T-cell (primary cell): ENCODE measurements at regions of chr1 and their contacts with region 1.

Region 1: DNA sequence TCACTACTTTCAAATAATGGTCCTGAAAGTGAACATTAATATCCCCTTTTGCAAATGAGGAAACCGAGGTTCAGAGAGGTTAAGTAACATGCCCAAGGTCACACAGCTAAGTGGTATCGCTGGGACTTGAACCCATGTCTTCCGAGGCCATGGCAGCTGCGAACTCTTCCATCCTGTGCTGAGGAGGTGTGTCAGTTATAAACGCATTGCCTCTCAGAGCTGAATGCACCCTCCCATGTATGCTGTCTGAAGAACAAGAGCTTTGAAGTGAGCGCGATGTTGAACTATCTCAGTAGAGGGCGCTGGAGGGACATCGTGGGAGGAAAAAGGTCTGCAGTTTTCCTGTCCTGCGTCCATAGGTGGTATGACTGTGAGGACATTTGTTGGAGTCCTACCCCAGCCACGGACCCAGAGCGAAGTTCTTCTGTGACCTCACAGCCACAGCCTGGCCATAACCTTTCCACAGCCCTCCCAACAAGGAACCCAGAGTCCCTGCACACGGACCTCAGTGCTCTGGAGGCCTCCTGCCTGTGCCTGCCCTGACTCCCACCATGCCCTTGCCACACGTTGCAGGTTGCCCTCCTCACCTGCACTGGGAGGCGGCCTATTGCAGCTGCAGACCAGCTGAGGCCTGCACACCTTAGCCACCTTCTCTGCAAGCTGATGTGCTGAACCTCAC is 7.5 kb downstream of the MYOC start:
- DNase-seq: peak; percentile 6 to 74 (median 47)
- ATAC-seq: peak; percentile 84 to 88 (median 87)
- H3K4me3 ChIP-seq: no peak overlapping the region
- H3K4me3 Mint-ChIP-seq: no peak overlapping the region
- H3K27ac ChIP-seq: no peak overlapping the region
- H3K27ac Mint-ChIP-seq: no peak overlapping the region
- H3K4me1 ChIP-seq: peaks cover 0 to 6% of the 10 kb centered on the region in 2 experiments
- H3K4me1 Mint-ChIP-seq: peaks cover 5 to 7% (median 6%) of the 10 kb centered on the region in 3 donors
- H3K27me3 ChIP-seq: peaks cover 0 to 13% of the 10 kb centered on the region in 2 experiments
- H3K27me3 Mint-ChIP-seq: peaks cover 3 to 5% of the 10 kb centered on the region in 2 donors

Region 2: GRCh38 chr1:171583581-171584201 is 61.3 kb before region 1 on chr1:
- CTCF ChIA-PET with region 1: no interaction called
- POLR2A ChIA-PET with region 1: no interaction called
- DNase-seq: no peak
- ATAC-seq: no peak
- H3K4me3 ChIP-seq: no peak overlapping the region
- H3K4me3 Mint-ChIP-seq: no peak overlapping the region
- H3K27ac ChIP-seq: no peak overlapping the region
- H3K27ac Mint-ChIP-seq: no peak overlapping the region
- H3K4me1 ChIP-seq: no peaks in the 10 kb centered on the region
- H3K4me1 Mint-ChIP-seq: peaks cover 5 to 18% (median 11%) of the 10 kb centered on the region in 3 donors
- H3K27me3 ChIP-seq: no peaks in the 10 kb centered on the region
- H3K27me3 Mint-ChIP-seq: no peaks in the 10 kb centered on the region

Region 3: DNA sequence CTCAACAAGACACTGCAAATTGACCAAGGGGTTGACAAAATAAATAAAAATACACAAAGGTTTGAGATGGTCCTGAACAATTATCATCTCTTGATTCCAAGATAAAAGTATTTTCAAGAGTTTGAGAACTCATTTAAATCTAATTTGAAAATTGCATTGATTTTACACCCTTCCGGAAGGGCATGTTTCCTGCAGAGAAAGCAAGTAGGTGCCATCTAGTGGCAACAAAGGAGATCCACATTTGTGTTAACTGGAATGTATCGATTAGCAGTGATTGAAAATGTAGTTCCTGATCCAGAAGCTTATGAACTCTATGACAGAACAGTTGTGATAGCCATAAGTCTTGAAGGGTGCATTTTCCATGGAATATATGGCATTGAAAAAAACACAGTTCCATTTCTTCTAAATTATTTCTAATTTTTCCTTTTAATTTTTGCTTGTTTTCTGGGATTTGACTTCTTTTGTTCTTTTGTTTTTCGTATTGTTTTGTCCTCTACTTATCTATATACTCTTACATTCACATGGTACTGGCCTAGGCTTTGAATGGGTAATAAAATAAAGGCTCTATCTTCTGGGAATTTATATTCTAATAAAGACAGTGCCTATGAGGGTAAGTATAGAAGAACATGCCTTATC is 340.0 kb after region 1 on chr1:
- CTCF ChIA-PET with region 1: interaction called, 7 to 27 read pairs
- POLR2A ChIA-PET with region 1: no interaction called
- DNase-seq: peak in 4 of 35 experiments; percentile 2 to 59 (median 9)
- ATAC-seq: peak in 3 of 4 experiments; percentile 48 to 55 (median 50)
- H3K4me3 ChIP-seq: no peak overlapping the region
- H3K4me3 Mint-ChIP-seq: no peak overlapping the region
- H3K27ac ChIP-seq: no peak overlapping the region
- H3K27ac Mint-ChIP-seq: no peak overlapping the region
- H3K4me1 ChIP-seq: no peaks in the 10 kb centered on the region
- H3K4me1 Mint-ChIP-seq: peaks cover 0 to 3% (median 2%) of the 10 kb centered on the region in 3 donors
- H3K27me3 ChIP-seq: no peaks in the 10 kb centered on the region
- H3K27me3 Mint-ChIP-seq: peaks cover 0 to 2% of the 10 kb centered on the region in 2 donors

Region 4: DNA sequence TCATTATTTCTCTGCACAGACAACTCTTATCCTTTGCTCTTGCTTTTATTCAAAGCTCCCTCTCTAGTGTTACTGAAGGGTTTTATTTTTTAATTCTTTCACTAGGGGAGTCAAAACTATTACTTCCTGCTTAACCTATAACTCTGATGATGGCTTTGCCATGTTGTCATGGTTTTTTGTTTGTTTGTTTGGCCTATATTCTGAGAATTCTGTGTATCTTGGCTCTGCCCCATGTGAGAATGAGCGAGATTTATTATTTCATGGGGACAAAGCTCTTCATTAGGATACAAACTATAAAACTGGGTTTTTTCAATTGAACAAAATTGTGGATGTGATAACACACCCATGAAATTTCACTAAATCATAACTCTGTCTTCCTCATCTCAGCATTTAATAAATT is 585.0 kb after region 1 on chr1:
- CTCF ChIA-PET with region 1: no interaction called
- POLR2A ChIA-PET with region 1: interaction called in 1 of 2 experiments, 12 read pairs
- DNase-seq: no peak
- ATAC-seq: no peak
- H3K4me3 ChIP-seq: no peak overlapping the region
- H3K4me3 Mint-ChIP-seq: no peak overlapping the region
- H3K27ac ChIP-seq: no peak overlapping the region
- H3K27ac Mint-ChIP-seq: no peak overlapping the region
- H3K4me1 ChIP-seq: no peaks in the 10 kb centered on the region
- H3K4me1 Mint-ChIP-seq: peaks cover 4 to 12% (median 8%) of the 10 kb centered on the region in 3 donors
- H3K27me3 ChIP-seq: no peaks in the 10 kb centered on the region
- H3K27me3 Mint-ChIP-seq: no peaks in the 10 kb centered on the region